ENCODE measurements at regions of chr15 and their contacts with region 1.

Region 1: DNA sequence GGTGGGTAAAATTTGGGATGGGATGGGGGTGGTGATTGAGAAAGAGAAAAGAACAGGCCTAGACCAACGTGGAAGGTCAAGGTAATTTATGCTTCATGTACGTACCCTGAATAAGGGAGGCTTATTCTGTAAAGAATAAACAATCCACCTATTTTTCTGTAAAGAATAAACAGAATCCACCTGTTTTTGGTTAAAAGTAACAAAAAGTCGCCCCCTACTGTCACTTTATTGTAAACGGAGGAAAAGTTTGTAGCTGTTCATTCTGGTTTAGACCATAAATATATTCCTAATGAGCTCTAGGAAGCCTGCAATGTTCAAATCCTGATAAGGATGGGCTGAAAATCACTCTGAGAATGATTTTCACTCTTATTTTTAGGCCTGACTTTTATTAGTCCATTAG is 23.5 kb upstream of the SQOR start:
- DNase-seq: peak; percentile 31
- CTCF ChIP-seq: peak; percentile 45

Region 2: GRCh38 chr15:45457641-45458433 is 153.5 kb before region 1 on chr15:
- in situ Hi-C with region 1: loop called (anchors 10 kb)
- DNase-seq: peak; percentile 81
- CTCF ChIP-seq: peak; percentile 71

Measured in GM13977 (cell line).